HepG2 (cell line): ENCODE measurements at regions of chr17 and their contacts with region 1.

Region 1: GRCh38 chr17:74816905-74817620 is 40.9 kb upstream of the NAT9 start:
- DNase-seq: no peak
- ATAC-seq: no peak
- H3K4me3 ChIP-seq: no peak overlapping the region
- H3K27ac ChIP-seq: no peak overlapping the region
- H3K4me1 ChIP-seq: no peaks in the 10 kb centered on the region
- H3K27me3 ChIP-seq: no peaks in the 10 kb centered on the region
- CTCF ChIP-seq: no peak
- EP300 ChIP-seq: no peak
- POLR2A ChIP-seq: no peak
- RAD21 ChIP-seq: no peak

Region 2: DNA sequence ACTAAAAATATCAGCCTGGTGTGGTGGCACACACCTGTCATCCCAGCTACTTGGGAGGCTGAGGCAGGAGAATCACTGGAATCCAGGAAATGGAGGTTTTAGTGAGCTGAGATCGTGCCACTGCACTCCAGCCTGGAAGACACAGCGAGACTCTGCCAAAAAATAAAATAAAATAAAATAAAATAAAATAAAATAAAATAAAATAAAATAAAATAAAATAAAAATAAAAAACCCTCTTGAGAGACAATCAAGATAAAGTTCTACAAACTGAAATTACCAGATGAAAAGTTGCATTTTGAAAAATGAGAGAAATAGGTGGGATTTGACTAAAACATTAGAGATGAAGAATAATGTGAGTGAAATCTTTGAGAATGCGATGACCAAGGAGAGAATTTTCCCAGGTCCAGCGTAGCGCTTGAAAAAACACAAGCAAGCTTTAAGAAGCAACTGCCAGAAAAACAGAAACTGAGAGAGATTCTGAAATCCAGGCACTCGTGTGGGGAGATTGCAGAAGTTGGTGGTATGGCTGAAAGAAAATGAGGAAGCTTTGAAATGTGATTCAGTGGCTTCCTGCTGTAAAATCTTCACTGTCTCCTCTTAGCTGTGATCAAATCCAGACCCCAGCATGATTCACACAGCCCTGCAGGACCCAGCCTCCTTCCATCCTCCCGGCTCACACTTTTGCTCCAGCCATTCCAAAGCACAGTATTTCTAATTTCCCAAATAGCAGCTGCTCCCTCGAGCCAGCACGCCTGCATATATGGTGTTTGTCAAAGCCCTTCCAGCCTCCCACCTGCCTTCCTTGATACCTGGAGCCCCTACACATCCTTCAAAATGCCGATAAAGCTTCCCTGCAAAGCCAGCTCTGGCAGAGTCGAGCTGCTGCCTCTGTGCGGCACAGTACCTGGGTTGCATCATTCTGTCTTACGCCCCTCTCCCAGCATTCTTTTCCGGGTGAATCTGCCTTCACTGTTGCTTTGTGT is 185.3 kb before region 1 on chr17:
- CTCF ChIA-PET with region 1: no interaction called
- POLR2A ChIA-PET with region 1: no interaction called
- in situ Hi-C with region 1: no loop called
- intact Hi-C with region 1: no loop called
- DNase-seq: no peak
- ATAC-seq: peak; percentile 31; the same call in 1 of the 3 replicates
- H3K4me3 ChIP-seq: no peak overlapping the region
- H3K27ac ChIP-seq: no peak overlapping the region
- H3K4me1 ChIP-seq: no peaks in the 10 kb centered on the region
- H3K27me3 ChIP-seq: peaks cover 2 to 31% of the 10 kb centered on the region in 2 experiments; a peak in 3 of 5 replicates
- CTCF ChIP-seq: no peak
- EP300 ChIP-seq: no peak
- POLR2A ChIP-seq: no peak
- RAD21 ChIP-seq: no peak

Region 3: DNA sequence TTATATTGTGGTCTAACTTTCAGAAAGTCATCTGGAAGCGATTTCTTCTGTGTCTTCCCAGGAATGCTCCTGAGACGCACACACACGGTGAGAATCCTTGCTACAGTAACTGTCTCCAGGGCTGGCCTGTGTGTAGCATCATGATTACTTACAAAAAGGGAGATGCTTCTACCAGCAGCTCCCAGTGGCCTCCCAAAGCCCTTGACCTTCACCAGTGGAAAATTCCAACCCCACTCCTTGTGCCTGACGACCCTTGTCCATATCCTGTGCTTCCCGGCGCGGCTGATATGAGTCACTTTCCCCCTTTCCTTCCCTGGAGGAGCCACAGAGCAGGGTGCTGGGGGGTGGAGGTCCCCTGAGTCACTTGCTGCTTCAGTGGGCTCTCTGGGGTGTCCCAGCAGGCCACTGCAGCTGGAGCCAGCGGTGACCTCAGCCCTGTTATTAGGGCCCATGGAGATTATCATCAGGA is 18.8 kb before region 1 on chr17:
- CTCF ChIA-PET with region 1: no interaction called
- POLR2A ChIA-PET with region 1: no interaction called
- in situ Hi-C with region 1: no loop called
- intact Hi-C with region 1: no loop called
- DNase-seq: no peak
- ATAC-seq: no peak
- H3K4me3 ChIP-seq: no peak overlapping the region
- H3K27ac ChIP-seq: no peak overlapping the region
- H3K4me1 ChIP-seq: peaks cover 14% of the 10 kb centered on the region; the same call in 1 of the 2 replicates
- H3K27me3 ChIP-seq: no peaks in the 10 kb centered on the region
- CTCF ChIP-seq: no peak
- EP300 ChIP-seq: no peak
- POLR2A ChIP-seq: no peak
- RAD21 ChIP-seq: no peak

Region 4: GRCh38 chr17:74852237-74853047 is 35.4 kb after region 1 on chr17:
- CTCF ChIA-PET with region 1: no interaction called
- POLR2A ChIA-PET with region 1: no interaction called
- in situ Hi-C with region 1: no loop called
- intact Hi-C with region 1: loop called (anchors 1 kb)
- DNase-seq: peak; percentile 67
- ATAC-seq: peak; percentile 58
- H3K4me3 ChIP-seq: peak overlapping the region; percentile 33 to 64 (median 50); a peak in 5 of 6 replicates
- H3K27ac ChIP-seq: no peak overlapping the region
- H3K4me1 ChIP-seq: peaks cover 9% of the 10 kb centered on the region
- H3K27me3 ChIP-seq: peaks cover 15 to 91% of the 10 kb centered on the region in 2 experiments
- CTCF ChIP-seq: peak; percentile 2; the same call in 1 of the 2 replicates
- EP300 ChIP-seq: no peak
- POLR2A ChIP-seq: no peak
- RAD21 ChIP-seq: no peak